ENCODE measurements at regions of chr21 and their contacts with region 1.

Region 1: GRCh38 chr21:23853796-23854379 is 1753.4 kb downstream of the MRPL39 start:
- DNase-seq: no peak
- H3K4me3 Mint-ChIP-seq: no peak overlapping the region
- H3K27ac Mint-ChIP-seq: no peak overlapping the region
- H3K4me1 Mint-ChIP-seq: peaks cover 8% of the 10 kb centered on the region
- H3K27me3 Mint-ChIP-seq: peaks cover 3% of the 10 kb centered on the region

Region 2: GRCh38 chr21:23780326-23780725 is 73.6 kb before region 1 on chr21:
- CTCF ChIA-PET with region 1: no interaction called
- POLR2A ChIA-PET with region 1: no interaction called
- DNase-seq: no peak
- H3K4me3 Mint-ChIP-seq: no peak overlapping the region
- H3K27ac Mint-ChIP-seq: no peak overlapping the region
- H3K4me1 Mint-ChIP-seq: no peaks in the 10 kb centered on the region
- H3K27me3 Mint-ChIP-seq: no peaks in the 10 kb centered on the region

Region 3: GRCh38 chr21:23968722-23969647 is 115.1 kb after region 1 on chr21:
- CTCF ChIA-PET with region 1: interaction called, 16 read pairs
- POLR2A ChIA-PET with region 1: no interaction called
- DNase-seq: peak; percentile 85
- H3K4me3 Mint-ChIP-seq: peak overlapping the region; percentile 31
- H3K27ac Mint-ChIP-seq: peak overlapping the region; percentile 88
- H3K4me1 Mint-ChIP-seq: peaks cover 28% of the 10 kb centered on the region
- H3K27me3 Mint-ChIP-seq: no peaks in the 10 kb centered on the region

Measured in activated CD4-positive, alpha-beta memory T cell treated with anti-CD3 and anti-CD28 coated beads, Interleukin-2, amount 10 ng/mL, durations not matched to agents 7 days and 5 days (primary cell).